ENCODE measurements at regions of chr9 and their contacts with region 1.

Region 1: DNA sequence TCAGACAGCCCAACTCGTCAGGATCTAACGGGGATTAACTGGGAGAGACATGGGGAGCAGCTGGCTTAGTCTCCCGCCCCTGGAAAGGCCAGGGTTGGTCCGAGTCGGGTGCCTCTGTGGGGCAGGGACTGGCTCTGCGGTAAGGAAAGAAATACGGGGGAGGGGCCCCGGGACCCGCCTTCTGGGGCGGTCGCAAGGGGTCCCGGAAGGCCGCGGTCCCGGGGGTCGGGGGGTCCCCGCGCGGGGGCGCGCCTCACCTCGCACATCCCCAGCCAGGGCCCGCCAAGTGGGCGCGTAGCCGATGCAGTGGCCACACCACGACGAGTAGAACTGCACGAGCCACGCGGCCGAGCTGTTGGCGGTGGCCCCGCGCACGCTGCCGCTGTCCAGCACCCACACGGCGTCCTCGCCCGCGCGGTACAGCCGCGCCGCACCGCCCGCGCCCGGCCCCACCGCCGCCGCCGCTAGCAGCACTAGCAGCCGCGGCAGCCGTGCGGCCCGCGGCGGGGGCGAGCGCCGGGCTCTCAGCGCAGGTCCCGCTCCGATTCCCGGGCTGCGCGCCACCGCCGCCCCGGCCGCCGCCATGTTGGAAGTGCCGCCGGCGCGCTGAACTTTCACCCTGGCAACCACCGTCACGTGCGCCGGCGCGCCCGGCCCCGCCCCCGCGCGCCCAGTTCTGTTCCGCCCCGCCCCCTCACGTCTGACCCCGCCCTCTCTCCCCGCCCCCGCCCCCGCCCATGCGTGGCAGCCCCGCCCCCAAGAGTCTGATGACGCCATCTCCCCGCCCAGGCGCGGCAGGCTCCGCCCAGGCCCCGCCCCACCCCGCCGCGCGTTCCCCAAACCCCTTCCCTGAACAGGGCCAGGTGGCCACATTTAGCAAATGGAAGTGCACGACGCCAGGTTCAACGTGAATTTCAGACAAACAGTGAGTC is at the start of gene QSOX2:
- DNase-seq: peak; percentile 70 to 89 (median 82)
- H3K4me3 ChIP-seq: peak within 1 kb of the TSS; percentile 50 to 89 (median 77)
- H3K27ac ChIP-seq: peak within 1 kb of the TSS in 30 of 59 donors; percentile 8 to 71 (median 52)
- H3K27me3 ChIP-seq: no peaks in the 10 kb centered on the region
- CTCF ChIP-seq: peak in 4 of 56 donors; percentile 12 to 21 (median 18)
- total RNA-seq, gene QSOX2: 9.6 to 20.4 (median 14.1) TPM

Region 2: GRCh38 chr9:136122425-136123383 is 122.8 kb before region 1 on chr9:
- intact Hi-C with region 1: no loop called
- DNase-seq: peak; percentile 71 to 90 (median 78)
- H3K4me3 ChIP-seq: peak overlapping the region in 55 of 59 donors; percentile 3 to 61 (median 42)
- H3K27ac ChIP-seq: peak overlapping the region in 19 of 59 donors; percentile 5 to 81 (median 52)
- H3K27me3 ChIP-seq: no peaks in the 10 kb centered on the region
- CTCF ChIP-seq: peak; percentile 83 to 99 (median 98)

Region 3: DNA sequence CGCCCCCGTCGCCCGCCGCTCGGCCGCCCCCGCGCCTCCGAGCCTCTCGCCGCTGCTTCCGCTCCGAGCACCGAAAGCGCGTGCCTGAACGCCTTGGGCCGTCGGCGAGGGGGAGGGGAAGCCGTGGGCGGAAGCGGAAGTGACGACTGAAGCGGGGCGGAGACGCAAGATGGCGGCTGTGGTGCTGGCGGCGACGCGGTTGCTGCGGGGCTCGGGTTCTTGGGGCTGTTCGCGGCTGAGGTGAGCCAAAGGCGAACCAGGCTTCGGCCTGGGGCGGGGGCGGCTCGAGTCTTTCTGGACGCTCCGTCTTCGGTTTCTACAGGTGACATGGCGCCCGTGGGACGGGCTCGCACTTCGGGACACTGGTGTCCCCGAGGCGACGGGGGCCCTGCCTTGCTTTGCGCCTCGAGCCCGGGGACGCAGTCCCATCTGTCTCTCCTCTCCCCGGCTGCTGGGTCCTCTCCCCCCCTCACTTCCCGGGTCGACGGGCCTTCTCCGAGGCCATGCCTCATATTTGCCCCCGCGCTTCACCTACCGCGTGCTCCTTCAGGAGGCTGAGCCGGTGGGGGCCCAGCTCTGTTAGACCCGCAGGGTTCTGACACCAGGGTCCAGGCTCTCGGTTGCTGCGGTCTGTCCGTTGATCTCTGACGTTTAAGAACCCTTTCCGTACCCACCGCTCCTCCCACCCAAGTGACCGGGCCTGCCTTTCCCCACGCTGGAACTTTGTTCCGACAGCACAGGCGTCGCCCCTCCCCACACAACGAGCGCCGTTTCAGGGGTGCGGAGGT is 165.2 kb after region 1 on chr9 and contains the starts of genes ENTR1 and PMPCA:
- intact Hi-C with region 1: loop called (anchors 10 kb)
- DNase-seq: peak; percentile 88 to 96 (median 91)
- H3K4me3 ChIP-seq: peak within 1 kb of the TSS; percentile 77 to 100 (median 95)
- H3K27ac ChIP-seq: peak within 1 kb of the TSS in 56 of 59 donors; percentile 27 to 94 (median 79)
- H3K27me3 ChIP-seq: no peaks in the 10 kb centered on the region
- CTCF ChIP-seq: peak in 16 of 56 donors; percentile 5 to 42 (median 24)
- total RNA-seq, gene ENTR1: 22.3 to 62.1 (median 38.0) TPM
- total RNA-seq, gene PMPCA: 39.7 to 75.4 (median 53.0) TPM

Region 4: GRCh38 chr9:136545966-136546698 is 300.6 kb after region 1 on chr9 and contains the start of gene NOTCH1:
- intact Hi-C with region 1: no loop called
- DNase-seq: peak; percentile 28 to 86 (median 74)
- H3K4me3 ChIP-seq: peak within 1 kb of the TSS; percentile 58 to 88 (median 76)
- H3K27ac ChIP-seq: peak within 1 kb of the TSS; percentile 69 to 98 (median 94)
- H3K27me3 ChIP-seq: peaks cover 0 to 17% (median 0%) of the 10 kb centered on the region in 45 donors
- CTCF ChIP-seq: peak in 10 of 56 donors; percentile 4 to 31 (median 10)
- total RNA-seq, gene NOTCH1: 24.0 to 92.1 (median 38.8) TPM

Region 5: GRCh38 chr9:136885950-136886578 is 640.6 kb after region 1 on chr9 and contains the start of gene TRAF2:
- intact Hi-C with region 1: no loop called
- DNase-seq: peak; percentile 96 to 100 (median 98)
- H3K4me3 ChIP-seq: peak within 1 kb of the TSS; percentile 69 to 96 (median 88)
- H3K27ac ChIP-seq: peak within 1 kb of the TSS in 51 of 59 donors; percentile 1 to 91 (median 69)
- H3K27me3 ChIP-seq: no peaks in the 10 kb centered on the region
- CTCF ChIP-seq: peak in 31 of 56 donors; percentile 9 to 49 (median 27)
- total RNA-seq, gene TRAF2: 11.1 to 47.8 (median 17.7) TPM

Region 6: GRCh38 chr9:136902259-136902821 is 656.9 kb after region 1 on chr9:
- intact Hi-C with region 1: no loop called
- DNase-seq: no peak
- H3K4me3 ChIP-seq: peak overlapping the region in 1 of 59 donors; percentile 4
- H3K27ac ChIP-seq: peak overlapping the region in 29 of 59 donors; percentile 1 to 70 (median 37)
- H3K27me3 ChIP-seq: no peaks in the 10 kb centered on the region
- CTCF ChIP-seq: no peak